ENCODE measurements at regions of chr22 and their contacts with region 1.

Region 1: GRCh38 chr22:37815582-37815981 is 7.6 kb upstream of the GALR3 start:
- DNase-seq: no peak
- H3K4me3 ChIP-seq: no peak overlapping the region
- H3K27ac ChIP-seq: no peak overlapping the region
- H3K4me1 ChIP-seq: peaks cover 0 to 4% of the 10 kb centered on the region in 2 donors
- H3K27me3 ChIP-seq: no peaks in the 10 kb centered on the region
- CTCF ChIP-seq: no peak
- POLR2A ChIP-seq: no peak

Region 2: GRCh38 chr22:37741312-37741795 is 74.2 kb before region 1 on chr22:
- intact Hi-C with region 1: no loop called
- DNase-seq: peak in 1 of 2 donors; percentile 79
- H3K4me3 ChIP-seq: peak overlapping the region in 1 of 3 donors; percentile 25
- H3K27ac ChIP-seq: peak overlapping the region; percentile 65 to 79
- H3K4me1 ChIP-seq: no peaks in the 10 kb centered on the region
- H3K27me3 ChIP-seq: no peaks in the 10 kb centered on the region
- CTCF ChIP-seq: no peak
- POLR2A ChIP-seq: no peak

Region 3: DNA sequence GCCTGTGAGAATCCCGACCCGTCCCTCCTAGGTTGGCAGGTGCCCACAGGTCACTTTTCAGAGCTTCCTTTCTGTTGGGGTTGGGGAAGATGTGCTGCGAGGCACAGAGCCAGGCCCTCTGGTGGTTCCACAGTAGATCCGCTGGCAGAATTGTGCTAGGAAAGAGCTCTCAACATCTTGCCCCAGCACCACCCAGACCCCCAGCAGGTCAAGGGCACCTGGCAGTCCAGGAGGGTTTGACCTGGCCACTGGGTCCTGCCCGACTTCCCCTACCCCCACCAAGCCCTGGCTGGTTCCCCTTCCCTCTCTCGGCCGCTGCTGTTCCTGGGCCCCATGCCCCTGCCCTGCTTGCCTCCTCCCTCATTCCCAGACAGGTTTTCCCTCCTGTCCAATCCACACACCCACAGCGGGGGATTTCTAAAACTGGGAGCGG is 34.1 kb before region 1 on chr22:
- intact Hi-C with region 1: no loop called
- DNase-seq: peak; percentile 55 to 81
- H3K4me3 ChIP-seq: no peak overlapping the region
- H3K27ac ChIP-seq: peak overlapping the region; percentile 58 to 63
- H3K4me1 ChIP-seq: peaks cover 10% of the 10 kb centered on the region in 2 donors
- H3K27me3 ChIP-seq: no peaks in the 10 kb centered on the region
- CTCF ChIP-seq: peak in 2 of 3 donors; percentile 44 to 59
- POLR2A ChIP-seq: no peak

Region 4: DNA sequence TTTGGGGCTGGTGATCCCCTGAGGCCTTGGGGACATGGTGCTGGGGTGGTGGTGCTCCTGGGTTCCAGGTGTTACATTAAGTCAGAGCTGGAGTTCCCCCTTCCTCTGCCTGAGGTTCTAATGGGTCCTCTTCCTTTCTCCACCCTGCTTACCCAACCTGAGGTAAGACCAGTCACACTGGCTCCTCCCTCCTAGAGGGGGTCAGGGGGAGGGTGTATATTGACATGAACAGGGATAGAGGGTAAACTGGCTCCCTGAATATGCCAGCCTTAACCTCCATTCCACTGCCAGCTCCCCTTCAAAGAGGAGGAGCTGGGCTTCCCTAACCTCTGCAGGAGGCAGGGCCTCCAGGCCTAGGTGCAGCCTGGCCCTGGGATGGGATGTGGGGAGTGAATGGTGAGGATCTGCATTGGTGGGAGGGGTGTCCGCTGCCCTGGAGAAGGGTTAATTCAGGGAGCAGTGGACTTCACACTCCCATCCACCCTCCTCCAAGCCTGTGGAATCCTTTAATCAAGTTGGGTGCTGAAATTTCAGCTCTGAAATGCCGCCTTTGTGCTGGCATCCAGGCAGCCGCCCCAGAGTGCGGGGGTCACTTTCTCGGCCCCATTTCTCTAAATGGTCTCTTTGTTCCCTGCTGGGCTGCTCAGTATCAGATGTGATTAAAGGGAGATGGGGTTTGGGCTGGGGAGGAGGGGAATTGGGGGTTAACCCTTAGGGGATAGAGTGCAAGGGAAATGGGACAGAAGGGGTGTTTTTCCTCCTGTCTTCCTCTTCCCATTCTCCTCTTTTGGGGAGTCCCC is 153.1 kb after region 1 on chr22:
- intact Hi-C with region 1: loop called (anchors 1 kb)
- DNase-seq: no peak
- H3K4me3 ChIP-seq: no peak overlapping the region
- H3K27ac ChIP-seq: peak overlapping the region in 1 of 2 donors; percentile 54
- H3K4me1 ChIP-seq: no peaks in the 10 kb centered on the region
- H3K27me3 ChIP-seq: no peaks in the 10 kb centered on the region
- CTCF ChIP-seq: no peak
- POLR2A ChIP-seq: no peak

Measured in breast epithelium (tissue), 4 donors.